Panc1 (cell line): ENCODE measurements at regions of chr16 and their contacts with region 1.

Region 1: DNA sequence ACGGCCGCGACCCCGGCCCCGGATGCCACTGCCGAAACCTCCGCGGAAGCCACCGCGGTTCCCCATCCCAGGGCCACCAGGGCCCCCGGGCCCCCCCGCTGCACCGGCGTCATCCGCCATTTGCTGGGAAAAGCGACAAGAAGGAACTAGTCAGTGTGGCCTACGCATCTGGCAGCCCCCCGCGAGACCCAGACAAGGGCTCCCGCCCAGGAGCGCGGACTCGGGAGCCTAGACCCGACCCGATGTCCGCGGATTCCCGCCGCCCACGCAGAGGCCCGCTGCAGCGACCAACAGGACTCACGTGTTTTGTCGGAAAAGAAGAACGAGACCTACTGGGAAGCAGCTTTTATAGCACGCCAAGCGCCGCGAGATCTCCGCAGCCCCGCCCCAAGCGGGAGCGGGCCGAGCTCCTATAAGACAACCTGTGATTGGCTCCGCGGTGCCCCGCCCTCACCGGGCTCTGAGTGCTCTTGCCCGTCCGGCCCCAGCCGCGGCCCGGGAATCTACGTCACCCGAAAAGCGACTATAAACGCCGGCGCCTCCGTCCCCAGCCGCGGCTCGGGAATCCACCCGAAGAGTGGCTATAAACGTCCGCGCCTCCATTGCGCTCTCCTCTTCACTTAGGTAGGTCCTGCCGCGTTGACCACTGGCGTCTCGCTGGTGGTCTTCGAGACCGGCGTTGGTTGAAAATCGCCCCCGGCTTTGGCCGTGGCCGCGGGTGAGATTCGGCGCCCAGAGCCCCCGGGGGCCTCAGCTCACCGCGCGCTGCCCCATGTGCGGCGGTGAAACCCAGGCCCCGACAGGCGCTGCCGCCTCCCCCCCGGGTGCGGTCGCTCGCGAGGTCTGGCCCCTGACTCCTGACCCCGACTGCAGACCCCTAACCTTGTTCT is at the start of gene RPS2:
- DNase-seq: peak; percentile 89
- ATAC-seq: peak; percentile 83
- H3K4me3 ChIP-seq: peak within 1 kb of the TSS; percentile 99
- H3K27ac ChIP-seq: peak within 1 kb of the TSS; percentile 96
- H3K4me1 ChIP-seq: peaks cover 12% of the 10 kb centered on the region
- H3K27me3 ChIP-seq: no peaks in the 10 kb centered on the region
- CTCF ChIP-seq: no peak
- total RNA-seq, gene RPS2: 2,794 TPM

Region 2: DNA sequence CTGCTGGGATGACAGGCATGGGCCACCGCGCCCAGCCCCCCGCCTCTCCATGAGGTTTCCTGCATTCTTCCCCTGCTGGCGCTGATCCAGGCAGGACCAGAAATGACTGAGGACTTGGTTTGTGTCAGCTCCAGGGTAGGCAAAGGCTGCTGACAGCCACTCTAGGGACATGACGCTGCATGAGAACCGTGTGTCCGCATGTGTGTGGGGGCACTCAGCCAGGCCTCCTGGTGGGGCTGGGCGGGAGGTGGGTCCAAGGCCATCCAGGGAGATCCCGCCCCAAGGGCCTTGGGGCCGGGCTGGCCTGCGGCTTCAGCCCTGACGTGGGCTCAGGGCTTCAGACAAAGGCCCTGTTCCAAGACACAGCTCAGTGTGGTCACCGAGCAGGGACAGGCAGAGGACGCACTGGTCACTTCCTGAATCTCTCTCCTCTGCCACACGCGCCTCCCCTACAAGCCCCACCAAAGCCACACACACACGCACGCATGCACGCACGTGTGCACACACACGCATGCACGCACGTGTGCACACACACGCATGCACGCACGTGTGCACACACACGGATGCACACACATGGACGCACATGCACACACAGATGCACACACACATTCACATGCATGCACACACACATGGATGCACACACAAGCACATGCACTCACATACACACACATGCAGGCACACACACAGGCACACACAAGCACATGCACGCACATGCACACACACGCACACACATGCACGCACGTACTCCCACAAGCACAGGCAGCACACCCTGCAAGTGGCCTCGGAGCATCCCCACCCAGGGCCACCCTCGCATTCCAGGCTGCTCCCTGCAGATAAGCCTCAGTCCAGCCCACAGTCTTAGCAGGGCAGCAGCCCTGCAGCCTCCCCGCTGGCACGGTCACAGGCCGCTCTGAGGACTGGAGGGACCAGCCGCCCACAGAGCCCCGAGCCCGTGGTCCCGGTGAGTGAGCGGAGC is 436.6 kb before region 1 on chr16:
- CTCF ChIA-PET with region 1: no interaction called
- POLR2A ChIA-PET with region 1: interaction called, 11 read pairs
- in situ Hi-C with region 1: no loop called
- intact Hi-C with region 1: no loop called
- DNase-seq: no peak
- ATAC-seq: no peak
- H3K4me3 ChIP-seq: no peak overlapping the region
- H3K27ac ChIP-seq: no peak overlapping the region
- H3K4me1 ChIP-seq: no peaks in the 10 kb centered on the region
- H3K27me3 ChIP-seq: no peaks in the 10 kb centered on the region
- CTCF ChIP-seq: no peak

Region 3: GRCh38 chr16:1826691-1827575 is 137.8 kb before region 1 on chr16 and contains the starts of genes FAHD1 and HAGH:
- CTCF ChIA-PET with region 1: no interaction called
- POLR2A ChIA-PET with region 1: interaction called, 12 read pairs
- in situ Hi-C with region 1: no loop called
- intact Hi-C with region 1: no loop called
- DNase-seq: peak; percentile 85
- ATAC-seq: peak; percentile 93
- H3K4me3 ChIP-seq: peak within 1 kb of the TSS; percentile 99 to 100
- H3K27ac ChIP-seq: peak within 1 kb of the TSS; percentile 96
- H3K4me1 ChIP-seq: peaks cover 17% of the 10 kb centered on the region
- H3K27me3 ChIP-seq: no peaks in the 10 kb centered on the region
- CTCF ChIP-seq: no peak
- total RNA-seq, gene FAHD1: 34.6 TPM
- total RNA-seq, gene HAGH: 58.9 TPM

Region 4: GRCh38 chr16:1857433-1858097 is 107.2 kb before region 1 on chr16:
- CTCF ChIA-PET with region 1: no interaction called
- POLR2A ChIA-PET with region 1: interaction called, 12 read pairs
- in situ Hi-C with region 1: no loop called
- intact Hi-C with region 1: no loop called
- DNase-seq: no peak
- ATAC-seq: no peak
- H3K4me3 ChIP-seq: no peak overlapping the region
- H3K27ac ChIP-seq: no peak overlapping the region
- H3K4me1 ChIP-seq: no peaks in the 10 kb centered on the region
- H3K27me3 ChIP-seq: no peaks in the 10 kb centered on the region; the same call in 1 of the 2 replicates
- CTCF ChIP-seq: no peak

Region 5: GRCh38 chr16:1863681-1864460 is 100.9 kb before region 1 on chr16:
- CTCF ChIA-PET with region 1: no interaction called
- POLR2A ChIA-PET with region 1: interaction called, 13 read pairs
- in situ Hi-C with region 1: no loop called
- intact Hi-C with region 1: no loop called
- DNase-seq: no peak
- ATAC-seq: peak; percentile 68; the same call in 1 of the 2 replicates
- H3K4me3 ChIP-seq: no peak overlapping the region
- H3K27ac ChIP-seq: no peak overlapping the region
- H3K4me1 ChIP-seq: peaks cover 3% of the 10 kb centered on the region; the same call in 1 of the 2 replicates
- H3K27me3 ChIP-seq: no peaks in the 10 kb centered on the region; the same call in 1 of the 2 replicates
- CTCF ChIP-seq: peak; percentile 80

Region 6: GRCh38 chr16:1983544-1984346 is 19.0 kb after region 1 on chr16 and contains the start of gene GFER:
- CTCF ChIA-PET with region 1: no interaction called
- POLR2A ChIA-PET with region 1: interaction called, 13 read pairs
- in situ Hi-C with region 1: no loop called
- intact Hi-C with region 1: no loop called
- DNase-seq: no peak
- ATAC-seq: peak; percentile 84
- H3K4me3 ChIP-seq: peak within 1 kb of the TSS; percentile 73 to 76
- H3K27ac ChIP-seq: peak within 1 kb of the TSS; percentile 92
- H3K4me1 ChIP-seq: peaks cover 49% of the 10 kb centered on the region
- H3K27me3 ChIP-seq: no peaks in the 10 kb centered on the region
- CTCF ChIP-seq: peak; percentile 77; the same call in 1 of the 2 replicates
- total RNA-seq, gene GFER: 49.2 TPM